Activated CD4-positive, alpha-beta T cell treated with anti-CD3 and anti-CD28 coated beads, Interleukin-2, amount 10 ng/mL, durations not matched to agents 7 days and 5 days (primary cell): ENCODE measurements at regions of chr14 and their contacts with region 1.

Region 1: DNA sequence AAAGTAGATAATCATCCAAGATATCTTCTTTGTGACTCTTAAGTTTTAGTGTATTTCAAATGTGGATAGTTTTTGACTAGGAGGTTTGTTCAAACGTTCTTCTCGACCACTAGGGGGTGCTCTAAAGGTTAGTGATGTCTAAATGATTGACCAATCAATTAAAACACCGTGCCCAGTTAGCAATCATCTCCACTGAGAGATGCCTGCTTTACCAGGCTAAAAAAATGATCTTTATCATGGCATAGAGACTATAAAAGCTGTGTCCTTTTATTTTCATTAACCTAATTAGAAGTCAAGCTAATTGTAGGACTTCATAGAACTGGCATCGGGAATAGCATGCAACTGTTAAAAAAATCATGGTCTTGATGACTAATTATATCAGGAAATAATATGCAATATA is 153.9 kb downstream of the PRKCH start:
- DNase-seq: peak; percentile 54
- H3K4me3 Mint-ChIP-seq: peak overlapping the region; percentile 30
- H3K27ac Mint-ChIP-seq: peak overlapping the region; percentile 86
- H3K4me1 Mint-ChIP-seq: peaks cover 94% of the 10 kb centered on the region
- H3K27me3 Mint-ChIP-seq: no peaks in the 10 kb centered on the region

Region 2: GRCh38 chr14:61355892-61356325 is 119.4 kb before region 1 on chr14:
- CTCF ChIA-PET with region 1: no interaction called
- POLR2A ChIA-PET with region 1: no interaction called
- DNase-seq: no peak
- H3K4me3 Mint-ChIP-seq: peak overlapping the region; percentile 1
- H3K27ac Mint-ChIP-seq: peak overlapping the region; percentile 43
- H3K4me1 Mint-ChIP-seq: peaks cover 90% of the 10 kb centered on the region
- H3K27me3 Mint-ChIP-seq: no peaks in the 10 kb centered on the region

Region 3: GRCh38 chr14:61489932-61490331 is 14.6 kb after region 1 on chr14:
- CTCF ChIA-PET with region 1: interaction called, 16 read pairs
- POLR2A ChIA-PET with region 1: no interaction called
- DNase-seq: no peak
- H3K4me3 Mint-ChIP-seq: no peak overlapping the region
- H3K27ac Mint-ChIP-seq: no peak overlapping the region
- H3K4me1 Mint-ChIP-seq: peaks cover 31% of the 10 kb centered on the region
- H3K27me3 Mint-ChIP-seq: no peaks in the 10 kb centered on the region

Region 4: GRCh38 chr14:61503167-61503801 is 28.0 kb after region 1 on chr14:
- CTCF ChIA-PET with region 1: interaction called, 14 read pairs
- POLR2A ChIA-PET with region 1: no interaction called
- DNase-seq: peak; percentile 70
- H3K4me3 Mint-ChIP-seq: peak overlapping the region; percentile 57
- H3K27ac Mint-ChIP-seq: peak overlapping the region; percentile 97
- H3K4me1 Mint-ChIP-seq: peaks cover 91% of the 10 kb centered on the region
- H3K27me3 Mint-ChIP-seq: no peaks in the 10 kb centered on the region

Region 5: DNA sequence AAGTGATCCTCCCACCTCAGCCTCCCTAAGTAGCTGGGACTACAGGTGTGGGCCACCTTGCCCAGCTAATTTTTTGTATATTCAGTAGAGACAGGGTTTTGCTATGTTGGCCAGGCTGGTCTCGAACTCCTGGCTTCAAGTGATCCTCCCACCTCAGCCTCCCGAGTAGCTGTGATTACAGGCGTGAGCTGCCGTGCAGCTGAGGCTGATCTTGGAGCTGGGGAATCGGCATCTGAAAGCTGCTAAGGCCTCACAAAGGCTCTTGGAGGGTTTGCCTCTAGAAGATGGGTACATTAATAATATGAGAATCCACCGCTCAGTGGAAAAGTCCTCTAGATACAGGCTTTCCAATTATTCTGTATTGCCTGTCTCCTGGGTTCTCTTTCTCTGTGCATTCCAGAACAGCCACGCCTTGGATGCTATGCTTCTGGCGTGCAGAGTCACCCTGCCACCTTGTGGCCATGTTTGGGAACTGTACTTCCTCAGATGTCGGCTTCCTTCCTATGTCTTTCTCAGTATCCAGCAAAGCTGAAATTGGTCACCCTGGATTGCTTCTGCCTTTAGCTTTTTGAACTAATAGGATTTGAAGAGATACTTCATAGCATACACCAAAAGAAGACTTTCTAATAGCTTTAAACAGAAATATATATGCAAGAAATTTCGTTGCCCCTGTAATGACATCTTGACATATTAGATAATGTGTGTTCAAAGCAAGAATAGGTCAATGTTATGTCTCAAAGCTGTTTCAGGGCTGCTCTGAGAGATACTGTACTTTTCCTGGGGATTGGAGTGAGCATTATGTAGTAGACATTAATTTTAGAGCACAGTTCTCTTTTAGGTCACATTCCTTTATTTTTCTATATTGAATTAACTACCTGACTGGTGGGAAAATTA is 362.3 kb after region 1 on chr14:
- CTCF ChIA-PET with region 1: interaction called, 16 read pairs
- POLR2A ChIA-PET with region 1: no interaction called
- DNase-seq: peak; percentile 79
- H3K4me3 Mint-ChIP-seq: no peak overlapping the region
- H3K27ac Mint-ChIP-seq: no peak overlapping the region
- H3K4me1 Mint-ChIP-seq: peaks cover 5% of the 10 kb centered on the region
- H3K27me3 Mint-ChIP-seq: peaks cover 25% of the 10 kb centered on the region

Region 6: DNA sequence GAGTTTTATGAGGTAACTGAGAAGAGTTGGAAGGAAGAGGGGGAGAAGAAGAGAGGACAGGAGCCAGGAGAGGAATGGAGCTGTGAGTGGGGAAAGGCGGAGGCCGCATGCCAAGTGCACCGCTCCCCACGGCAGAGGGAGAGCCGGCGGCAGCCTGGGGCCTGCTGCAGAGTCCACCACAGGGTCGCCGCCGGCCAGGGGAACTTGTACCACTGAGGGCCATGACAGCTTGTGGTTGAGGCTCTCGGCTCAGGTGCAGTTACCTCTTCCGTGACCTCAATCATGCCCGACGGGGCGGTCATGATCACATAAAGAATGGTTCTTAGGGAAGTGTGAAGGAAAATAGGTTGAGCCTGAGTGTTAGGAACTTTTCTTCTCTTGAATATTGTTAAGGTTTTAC is 611.9 kb after region 1 on chr14:
- CTCF ChIA-PET with region 1: no interaction called
- POLR2A ChIA-PET with region 1: no interaction called
- DNase-seq: no peak
- H3K4me3 Mint-ChIP-seq: no peak overlapping the region
- H3K27ac Mint-ChIP-seq: no peak overlapping the region
- H3K4me1 Mint-ChIP-seq: no peaks in the 10 kb centered on the region
- H3K27me3 Mint-ChIP-seq: peaks cover 7% of the 10 kb centered on the region